Activated B cell treated with CpG ODN at 0.5 μM for 24 hours (primary cell): ENCODE measurements at regions of chr19 and their contacts with region 1.

Region 1: DNA sequence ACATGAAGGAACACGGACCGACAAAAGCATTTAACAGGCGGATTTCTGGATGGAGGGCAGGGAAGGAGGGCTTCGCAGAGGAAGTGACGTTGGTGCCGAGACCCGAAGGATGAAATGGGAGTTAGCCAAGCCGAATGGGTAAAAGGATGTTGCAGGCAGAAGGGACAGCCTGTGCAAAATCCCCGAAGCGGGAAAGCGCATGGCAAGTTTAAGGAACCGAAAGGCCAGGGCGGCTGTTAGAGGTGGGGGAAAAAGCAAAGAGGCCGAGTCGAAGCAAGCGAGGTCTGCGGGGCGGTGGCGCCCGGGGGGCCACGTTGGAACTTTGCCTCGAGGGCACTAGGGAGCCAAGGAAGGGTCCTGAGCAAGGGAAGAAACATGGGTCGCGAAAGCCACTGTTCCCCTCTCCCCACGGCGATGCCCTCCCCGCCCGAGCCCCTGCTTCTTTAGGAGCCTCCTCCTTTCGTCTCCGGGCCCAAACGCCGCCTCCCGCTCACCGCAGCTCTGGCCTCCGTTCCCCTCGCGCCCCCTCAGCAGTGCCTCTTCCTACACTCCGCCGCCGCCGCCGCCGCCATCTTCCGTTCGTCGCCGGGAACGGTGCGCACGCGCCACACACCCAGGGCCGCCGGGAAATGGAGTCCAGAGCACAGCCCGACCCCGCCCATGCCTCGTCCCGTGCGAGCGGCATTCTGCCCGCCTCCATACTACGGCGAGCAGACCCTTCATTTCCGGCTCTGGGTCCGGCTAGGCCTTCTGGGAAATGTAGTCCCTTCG is at the start of gene SYMPK:
- DNase-seq: peak; percentile 96
- ATAC-seq: peak; percentile 94
- H3K4me3 Mint-ChIP-seq: peak within 1 kb of the TSS; percentile 96
- H3K27ac Mint-ChIP-seq: peak within 1 kb of the TSS; percentile 96
- H3K4me1 Mint-ChIP-seq: peaks cover 37% of the 10 kb centered on the region
- H3K27me3 Mint-ChIP-seq: peaks cover 19% of the 10 kb centered on the region
- CTCF ChIP-seq: no peak
- total RNA-seq, gene SYMPK: 131 and 150 TPM in 2 replicates

Region 2: DNA sequence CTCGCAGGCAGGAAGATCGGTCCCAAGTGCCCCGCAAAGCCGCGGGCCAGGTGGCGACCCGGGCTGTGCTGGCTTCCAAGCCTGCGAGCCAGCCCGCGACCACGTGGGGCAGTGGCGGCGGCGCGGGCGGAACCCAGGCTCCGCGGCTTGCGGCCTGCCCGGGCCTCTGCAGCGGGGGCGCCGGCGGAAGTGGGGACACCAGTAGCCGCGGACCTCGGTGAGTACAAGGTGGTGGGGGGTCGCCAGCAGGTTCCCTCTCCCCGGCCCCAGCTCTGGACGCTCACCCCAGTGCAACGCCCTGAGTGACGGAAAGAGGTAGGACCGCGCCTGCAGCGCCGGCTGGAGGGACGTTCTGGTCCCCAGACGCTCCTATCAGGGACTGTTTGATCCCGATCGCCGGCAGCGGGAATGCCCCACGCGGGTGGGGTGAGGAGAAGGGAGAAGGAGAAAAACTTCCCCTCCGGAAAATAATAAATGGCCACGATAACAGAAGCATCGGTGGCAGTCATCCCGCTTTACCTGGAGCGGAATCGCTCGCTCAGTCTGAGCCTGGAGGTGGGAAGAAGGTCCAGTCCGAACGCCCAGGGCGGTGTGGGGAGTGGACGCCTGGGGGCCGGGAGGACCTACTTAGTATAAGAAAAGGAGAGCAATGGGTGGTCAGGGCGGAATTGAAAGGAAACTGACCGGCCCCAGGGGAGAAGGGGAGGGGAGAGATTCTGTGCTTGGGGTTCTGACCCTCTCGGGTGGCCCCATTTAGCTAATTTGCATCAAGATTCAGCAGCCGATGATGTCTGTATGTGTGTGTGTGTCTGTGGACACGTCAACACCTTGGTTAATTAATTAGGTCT is 783.5 kb before region 1 on chr19 and contains the start of gene GEMIN7:
- CTCF ChIA-PET with region 1: no interaction called
- POLR2A ChIA-PET with region 1: no interaction called
- intact Hi-C with region 1: loop called (anchors 10 kb)
- DNase-seq: peak; percentile 85
- ATAC-seq: peak; percentile 33
- H3K4me3 Mint-ChIP-seq: peak within 1 kb of the TSS; percentile 97
- H3K27ac Mint-ChIP-seq: peak within 1 kb of the TSS; percentile 90
- H3K4me1 Mint-ChIP-seq: peaks cover 60% of the 10 kb centered on the region
- H3K27me3 Mint-ChIP-seq: no peaks in the 10 kb centered on the region
- CTCF ChIP-seq: no peak
- total RNA-seq, gene GEMIN7: 37.0 and 38.7 TPM in 2 replicates

Region 3: DNA sequence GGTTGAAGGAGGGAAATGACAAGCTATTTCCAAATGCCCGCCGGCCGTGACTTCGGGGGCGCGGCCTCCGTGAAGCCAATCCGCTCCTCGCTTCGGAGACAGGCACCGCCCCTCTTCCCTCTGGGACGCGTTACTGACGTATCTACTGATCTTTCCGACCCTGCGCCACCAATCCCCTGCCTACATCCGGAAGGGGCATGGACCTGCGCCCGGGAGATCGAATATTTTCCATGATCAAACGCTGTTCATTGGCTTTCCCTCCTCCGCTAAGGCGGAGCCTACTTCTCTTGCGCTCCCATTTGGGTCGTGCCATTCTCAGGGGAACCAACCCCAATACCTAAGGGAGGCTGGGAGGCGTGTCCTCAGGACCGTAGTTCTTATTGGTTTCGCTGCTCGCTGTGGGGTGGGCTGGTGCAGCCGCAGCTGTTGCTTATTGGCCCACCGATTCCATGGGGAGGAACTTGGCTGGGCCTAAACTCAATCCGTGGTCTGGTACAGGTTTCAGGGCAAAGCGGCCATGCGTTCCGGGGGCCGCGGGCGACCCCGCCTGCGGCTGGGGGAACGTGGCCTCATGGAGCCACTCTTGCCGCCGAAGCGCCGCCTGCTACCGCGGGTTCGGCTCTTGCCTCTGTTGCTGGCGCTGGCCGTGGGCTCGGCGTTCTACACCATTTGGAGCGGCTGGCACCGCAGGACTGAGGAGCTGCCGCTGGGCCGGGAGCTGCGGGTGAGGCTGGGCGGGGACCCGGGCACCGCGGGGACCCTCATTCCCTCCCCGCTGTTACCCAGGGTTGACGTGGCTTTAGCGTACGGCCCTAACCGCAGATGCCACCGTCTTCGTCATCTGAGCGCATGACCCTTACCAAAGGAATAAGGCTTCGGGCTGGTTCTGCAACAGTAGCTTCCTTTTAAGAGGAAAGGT is 170.3 kb before region 1 on chr19 and contains the start of gene QPCTL:
- CTCF ChIA-PET with region 1: no interaction called
- POLR2A ChIA-PET with region 1: interaction called, 3 read pairs
- intact Hi-C with region 1: loop called (anchors 1 kb)
- DNase-seq: peak; percentile 90
- ATAC-seq: peak; percentile 86
- H3K4me3 Mint-ChIP-seq: peak within 1 kb of the TSS; percentile 94
- H3K27ac Mint-ChIP-seq: peak within 1 kb of the TSS; percentile 98
- H3K4me1 Mint-ChIP-seq: peaks cover 30% of the 10 kb centered on the region
- H3K27me3 Mint-ChIP-seq: no peaks in the 10 kb centered on the region
- CTCF ChIP-seq: no peak
- total RNA-seq, gene QPCTL: 19.3 and 21.1 TPM in 2 replicates

Region 4: DNA sequence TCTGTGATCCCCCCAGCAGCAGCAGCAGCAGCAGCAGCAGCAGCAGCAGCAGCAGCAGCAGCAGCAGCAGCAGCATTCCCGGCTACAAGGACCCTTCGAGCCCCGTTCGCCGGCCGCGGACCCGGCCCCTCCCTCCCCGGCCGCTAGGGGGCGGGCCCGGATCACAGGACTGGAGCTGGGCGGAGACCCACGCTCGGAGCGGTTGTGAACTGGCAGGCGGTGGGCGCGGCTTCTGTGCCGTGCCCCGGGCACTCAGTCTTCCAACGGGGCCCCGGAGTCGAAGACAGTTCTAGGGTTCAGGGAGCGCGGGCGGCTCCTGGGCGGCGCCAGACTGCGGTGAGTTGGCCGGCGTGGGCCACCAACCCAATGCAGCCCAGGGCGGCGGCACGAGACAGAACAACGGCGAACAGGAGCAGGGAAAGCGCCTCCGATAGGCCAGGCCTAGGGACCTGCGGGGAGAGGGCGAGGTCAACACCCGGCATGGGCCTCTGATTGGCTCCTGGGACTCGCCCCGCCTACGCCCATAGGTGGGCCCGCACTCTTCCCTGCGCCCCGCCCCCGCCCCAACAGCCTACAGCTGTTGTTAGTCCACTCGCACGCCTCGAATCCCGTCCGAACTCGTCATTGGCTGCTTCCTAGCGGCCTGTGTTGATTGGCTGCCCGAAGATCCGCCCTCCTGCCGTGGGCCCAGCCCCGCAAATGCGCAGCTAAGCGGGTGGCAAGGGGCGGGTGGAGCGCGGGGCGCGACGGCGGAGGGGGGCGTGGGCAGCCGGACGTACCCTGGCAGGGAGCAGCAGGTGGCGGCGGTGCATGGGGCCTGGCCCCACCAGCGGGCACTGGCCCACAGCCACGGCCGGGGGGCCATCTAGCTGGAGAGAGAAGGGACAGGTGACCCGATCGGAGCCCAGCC is 92.3 kb before region 1 on chr19:
- CTCF ChIA-PET with region 1: interaction called, 4 read pairs
- POLR2A ChIA-PET with region 1: interaction called, 16 read pairs
- intact Hi-C with region 1: loop called (anchors 1 kb)
- DNase-seq: peak; percentile 93
- ATAC-seq: peak; percentile 69
- H3K4me3 Mint-ChIP-seq: peak overlapping the region; percentile 89
- H3K27ac Mint-ChIP-seq: peak overlapping the region; percentile 88
- H3K4me1 Mint-ChIP-seq: peaks cover 19% of the 10 kb centered on the region
- H3K27me3 Mint-ChIP-seq: peaks cover 3% of the 10 kb centered on the region
- CTCF ChIP-seq: peak; percentile 71

Region 5: DNA sequence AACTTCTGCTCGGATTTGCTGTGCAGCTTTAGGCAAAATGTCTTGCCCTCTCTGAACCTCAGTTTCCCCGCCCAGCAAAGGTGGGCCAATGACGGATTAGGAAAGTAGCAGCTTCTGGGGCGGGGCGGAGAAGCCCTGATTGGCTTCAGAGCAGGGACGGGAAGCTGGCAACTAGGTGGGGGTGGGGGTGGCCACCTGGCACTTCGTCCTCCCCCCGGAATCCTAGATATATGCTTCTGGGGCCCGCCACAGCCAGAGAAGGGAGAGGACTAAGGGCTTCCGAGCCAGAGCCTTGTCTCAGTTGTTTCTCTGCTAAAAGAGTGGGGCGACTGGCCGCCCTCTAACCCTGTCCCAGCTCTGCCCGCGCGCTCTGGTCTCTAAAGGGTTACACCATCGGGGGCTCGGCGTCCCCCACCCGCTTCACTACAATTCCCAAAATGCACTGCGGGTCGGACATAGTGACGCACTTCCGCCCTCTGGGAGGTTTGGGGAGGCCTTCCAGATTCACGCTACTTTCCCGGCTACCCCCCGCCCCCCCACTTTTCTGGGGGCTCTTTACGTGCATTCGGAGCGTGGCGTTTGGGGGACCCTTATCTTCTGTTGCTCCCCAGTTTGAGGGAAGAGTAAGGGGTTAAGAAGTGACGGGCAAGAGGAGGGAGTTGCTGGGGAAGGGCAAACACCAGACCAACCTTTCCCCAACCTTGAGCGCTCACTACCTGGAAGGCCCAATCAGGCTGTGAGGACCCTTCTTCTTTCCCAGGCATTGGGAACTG is 23.9 kb after region 1 on chr19:
- CTCF ChIA-PET with region 1: interaction called, 16 read pairs
- POLR2A ChIA-PET with region 1: interaction called, 33 read pairs
- intact Hi-C with region 1: loop called (anchors 1 kb)
- DNase-seq: peak; percentile 86
- ATAC-seq: peak; percentile 65
- H3K4me3 Mint-ChIP-seq: peak overlapping the region; percentile 92
- H3K27ac Mint-ChIP-seq: peak overlapping the region; percentile 94
- H3K4me1 Mint-ChIP-seq: peaks cover 30% of the 10 kb centered on the region
- H3K27me3 Mint-ChIP-seq: no peaks in the 10 kb centered on the region
- CTCF ChIP-seq: no peak

Region 6: DNA sequence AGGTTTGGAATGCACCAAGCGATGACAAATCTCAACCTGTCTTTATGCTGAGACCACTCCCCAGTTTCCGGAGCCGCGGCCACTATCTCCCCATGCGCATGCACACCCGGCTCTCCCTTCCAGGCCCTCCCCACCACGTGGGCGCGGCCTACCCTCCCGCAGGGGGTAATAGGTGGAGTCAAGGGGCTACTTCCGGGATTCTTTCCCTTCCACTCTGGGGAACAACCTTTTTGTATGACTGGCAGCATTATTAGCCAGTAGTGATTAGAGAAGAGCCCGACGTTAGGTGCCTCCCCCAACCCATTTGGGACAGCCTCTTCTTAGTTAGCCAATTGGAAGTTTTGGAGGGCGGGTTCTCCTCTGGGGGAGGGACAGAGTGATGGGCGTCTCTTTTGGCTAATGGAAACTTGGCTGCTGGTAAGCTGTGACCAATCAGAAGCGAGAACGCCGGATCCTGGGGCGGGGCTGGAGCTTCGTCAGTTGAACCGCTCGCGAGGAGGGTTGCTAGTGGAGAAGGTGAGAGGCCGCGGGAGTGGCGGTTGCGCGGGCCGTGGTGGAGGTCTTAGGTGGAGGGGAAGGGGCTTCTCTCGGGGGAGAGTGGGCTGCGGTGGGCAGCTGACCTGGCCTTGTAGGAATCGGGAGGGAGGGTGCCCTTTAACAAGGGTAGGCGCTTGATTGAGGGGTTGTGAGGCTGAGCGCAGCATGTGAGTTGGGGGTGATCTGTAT is 132.4 kb after region 1 on chr19 and contains the start of gene CCDC61:
- CTCF ChIA-PET with region 1: no interaction called
- POLR2A ChIA-PET with region 1: no interaction called
- intact Hi-C with region 1: loop called (anchors 1 kb)
- DNase-seq: peak; percentile 85
- ATAC-seq: peak; percentile 94
- H3K4me3 Mint-ChIP-seq: no peak within 1 kb of the TSS
- H3K27ac Mint-ChIP-seq: no peak within 1 kb of the TSS
- H3K4me1 Mint-ChIP-seq: peaks cover 23% of the 10 kb centered on the region
- H3K27me3 Mint-ChIP-seq: peaks cover 21% of the 10 kb centered on the region
- CTCF ChIP-seq: no peak
- total RNA-seq, gene CCDC61: 24.9 and 26.9 TPM in 2 replicates

Region 7: DNA sequence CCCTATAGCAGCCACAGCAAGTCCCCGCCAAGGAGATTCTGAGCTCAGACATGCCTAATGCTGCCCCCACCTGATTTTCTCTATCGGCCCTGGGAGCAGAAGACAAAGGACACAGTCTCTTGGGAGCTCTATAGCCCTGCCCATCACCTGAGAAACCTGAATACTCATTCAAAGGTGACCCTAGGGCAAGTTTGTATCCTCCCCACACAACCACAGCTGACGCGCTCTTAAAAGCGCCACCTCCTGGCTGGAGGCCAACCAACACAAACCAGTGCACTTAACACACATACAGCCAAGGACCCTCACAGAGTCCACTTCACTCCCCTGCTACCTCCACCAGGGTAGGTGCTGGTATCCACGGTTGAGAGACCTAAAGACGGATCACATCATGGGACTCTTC is 186.8 kb after region 1 on chr19:
- CTCF ChIA-PET with region 1: no interaction called
- POLR2A ChIA-PET with region 1: no interaction called
- intact Hi-C with region 1: no loop called
- DNase-seq: no peak
- ATAC-seq: no peak
- H3K4me3 Mint-ChIP-seq: no peak overlapping the region
- H3K27ac Mint-ChIP-seq: no peak overlapping the region
- H3K4me1 Mint-ChIP-seq: no peaks in the 10 kb centered on the region
- H3K27me3 Mint-ChIP-seq: peaks cover 39% of the 10 kb centered on the region
- CTCF ChIP-seq: no peak

Region 8: GRCh38 chr19:46850228-46851203 is 987.8 kb after region 1 on chr19 and contains the start of gene AP2S1:
- CTCF ChIA-PET with region 1: no interaction called
- POLR2A ChIA-PET with region 1: no interaction called
- intact Hi-C with region 1: loop called (anchors 2 kb)
- DNase-seq: peak; percentile 84
- ATAC-seq: peak; percentile 91
- H3K4me3 Mint-ChIP-seq: peak within 1 kb of the TSS; percentile 96
- H3K27ac Mint-ChIP-seq: peak within 1 kb of the TSS; percentile 82
- H3K4me1 Mint-ChIP-seq: peaks cover 37% of the 10 kb centered on the region
- H3K27me3 Mint-ChIP-seq: no peaks in the 10 kb centered on the region
- CTCF ChIP-seq: no peak
- total RNA-seq, gene AP2S1: 74.7 and 81.3 TPM in 2 replicates